Ascending aorta (tissue), 2 donors: ENCODE measurements at regions of chr20 and their contacts with region 1.

Region 1: GRCh38 chr20:50165684-50166554 is 12.4 kb upstream of the PEDS1 start:
- DNase-seq: peak; percentile 99 to 100
- H3K4me3 ChIP-seq: peak overlapping the region; percentile 42 to 56
- H3K27ac ChIP-seq: peak overlapping the region; percentile 72 to 80
- H3K4me1 ChIP-seq: peaks cover 10 to 12% of the 10 kb centered on the region in 2 donors
- H3K27me3 ChIP-seq: no peaks in the 10 kb centered on the region
- CTCF ChIP-seq: no peak

Region 2: GRCh38 chr20:49982346-49983122 is 183.4 kb before region 1 on chr20 and contains the start of gene SNAI1:
- intact Hi-C with region 1: loop called (anchors 5 kb)
- DNase-seq: peak in 1 of 2 donors; percentile 84
- H3K4me3 ChIP-seq: peak within 1 kb of the TSS; percentile 66 to 80
- H3K27ac ChIP-seq: peak within 1 kb of the TSS; percentile 69 to 71
- H3K4me1 ChIP-seq: peaks cover 12 to 37% of the 10 kb centered on the region in 2 donors
- H3K27me3 ChIP-seq: no peaks in the 10 kb centered on the region
- CTCF ChIP-seq: peak; percentile 35 to 84 (median 62)
- total RNA-seq, gene SNAI1: 64.4 TPM

Region 3: DNA sequence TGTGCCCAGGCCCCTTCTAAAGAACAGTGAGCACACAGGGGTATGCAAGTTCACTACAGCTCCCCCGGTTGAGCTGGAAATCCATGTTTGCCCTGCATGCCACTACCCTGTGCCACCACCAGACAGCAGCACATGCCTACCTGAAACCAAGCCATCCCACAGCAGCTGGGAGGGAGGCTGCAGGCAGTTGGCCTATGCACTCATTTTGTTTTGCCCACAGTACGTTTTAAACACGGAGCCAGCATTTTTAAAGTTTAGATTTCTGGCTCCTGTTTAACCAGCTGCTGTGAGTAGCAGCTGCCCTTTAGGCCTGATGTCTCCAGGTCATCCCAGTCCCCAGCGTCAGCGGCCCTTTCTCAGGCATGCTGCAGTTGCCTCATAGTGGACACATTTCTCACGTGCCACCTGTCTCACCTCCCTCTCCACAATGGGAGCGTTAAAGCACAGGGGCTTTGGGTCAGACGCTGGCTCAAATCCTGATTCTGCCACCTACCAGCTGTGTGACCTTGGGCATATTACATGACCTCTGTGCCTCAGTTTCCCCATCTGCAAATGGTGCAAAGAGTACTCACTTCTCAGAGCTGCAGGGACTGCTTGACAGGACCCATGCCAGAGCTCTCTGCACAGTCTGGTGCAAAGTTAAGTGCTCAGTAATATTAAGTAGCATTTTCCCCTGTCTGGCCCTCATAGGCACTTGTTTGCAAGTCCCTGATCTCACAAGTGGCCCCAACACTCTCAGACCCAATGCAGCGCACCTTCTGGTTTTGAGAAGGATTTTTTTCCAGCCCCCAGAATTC is 44.8 kb before region 1 on chr20:
- intact Hi-C with region 1: loop called (anchors 1 kb)
- DNase-seq: peak in 1 of 2 donors; percentile 78
- H3K4me3 ChIP-seq: no peak overlapping the region
- H3K27ac ChIP-seq: no peak overlapping the region
- H3K4me1 ChIP-seq: peaks cover 0 to 6% of the 10 kb centered on the region in 2 donors
- H3K27me3 ChIP-seq: no peaks in the 10 kb centered on the region
- CTCF ChIP-seq: peak; percentile 80 to 87 (median 86)

Region 4: DNA sequence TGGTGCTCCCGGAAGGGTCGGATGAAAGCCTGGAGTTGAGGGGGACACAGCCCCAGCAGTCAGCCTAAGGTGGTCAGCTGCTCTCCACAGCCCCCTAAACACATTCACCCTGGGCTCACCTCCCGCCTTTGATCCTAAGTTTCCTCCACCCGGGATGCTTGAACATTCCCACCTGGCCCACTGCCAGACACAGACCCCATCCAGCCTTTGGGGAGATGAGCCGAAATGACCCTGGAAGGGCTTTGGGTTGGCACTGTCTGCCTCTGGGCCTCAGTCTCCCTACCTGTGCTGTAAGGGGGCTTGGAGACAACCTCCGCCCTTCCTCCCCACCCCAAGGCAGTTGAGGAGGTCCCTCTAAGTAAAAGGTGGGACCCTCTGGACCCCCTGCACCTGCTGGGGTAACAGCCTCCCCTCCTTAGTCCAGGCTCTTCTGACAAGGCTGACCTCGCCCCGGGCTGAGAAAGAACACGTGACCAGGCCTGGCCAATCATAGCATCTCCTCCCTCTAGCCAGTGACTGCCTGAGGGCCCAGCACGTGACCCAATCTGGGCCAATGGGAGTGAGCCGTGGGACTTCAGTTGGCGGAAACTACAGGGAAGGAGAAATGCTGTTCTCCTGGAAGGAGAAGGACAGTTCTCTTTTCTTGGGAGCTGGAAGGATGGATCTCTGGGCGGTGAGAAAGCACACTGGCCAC is 36.1 kb before region 1 on chr20:
- intact Hi-C with region 1: loop called (anchors 2 kb)
- DNase-seq: no peak
- H3K4me3 ChIP-seq: peak overlapping the region in 1 of 2 donors; percentile 34
- H3K27ac ChIP-seq: peak overlapping the region; percentile 54 to 60
- H3K4me1 ChIP-seq: peaks cover 13 to 16% of the 10 kb centered on the region in 2 donors
- H3K27me3 ChIP-seq: no peaks in the 10 kb centered on the region
- CTCF ChIP-seq: no peak

Region 5: DNA sequence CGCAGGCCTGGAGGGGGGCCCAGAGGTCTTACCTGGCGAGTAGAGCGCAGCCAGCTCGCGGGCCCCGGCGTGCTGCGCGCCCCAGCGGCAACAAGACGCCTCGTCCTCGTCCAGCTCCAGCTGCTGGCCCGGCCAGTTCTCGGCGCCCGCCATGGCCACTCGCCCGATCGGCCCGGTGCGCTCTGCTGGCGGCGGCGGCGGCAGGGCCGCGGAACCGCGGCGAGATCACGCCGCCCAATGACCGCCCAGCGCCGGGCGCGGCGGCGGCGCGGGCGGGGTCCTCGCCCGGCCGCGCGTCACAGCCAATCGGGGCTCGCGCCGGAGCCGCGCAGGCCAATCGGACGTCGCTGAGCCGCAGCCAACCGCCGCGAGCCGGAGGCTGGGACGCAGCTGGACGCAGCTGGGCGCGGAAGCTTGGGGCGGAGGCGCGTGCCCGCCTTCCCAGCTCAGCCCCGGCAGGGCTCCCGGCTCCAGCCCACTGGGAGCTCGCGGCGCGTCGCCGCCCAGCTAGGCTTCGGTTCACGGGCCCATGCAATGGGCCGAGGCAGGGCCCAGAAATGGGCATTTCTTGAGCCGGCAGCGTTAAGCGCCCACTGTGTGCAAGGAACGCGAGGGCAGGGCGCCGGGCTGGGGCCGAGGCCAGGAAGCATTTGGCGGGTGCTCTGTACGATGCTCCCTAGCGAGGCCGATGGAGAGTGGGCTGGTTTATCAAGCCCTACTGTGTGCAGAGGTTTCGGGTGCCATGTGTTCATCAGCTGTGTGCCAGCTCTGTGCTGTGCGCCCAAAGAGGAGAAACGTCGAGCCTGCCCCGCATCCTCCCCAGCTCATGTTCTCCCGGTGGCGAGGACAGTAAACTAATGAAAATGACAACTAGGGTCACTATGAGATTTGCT is 12.2 kb before region 1 on chr20 and contains the start of gene PEDS1:
- intact Hi-C with region 1: loop called (anchors 1 kb)
- DNase-seq: peak; percentile 49 to 94
- H3K4me3 ChIP-seq: peak within 1 kb of the TSS; percentile 81 to 84
- H3K27ac ChIP-seq: peak within 1 kb of the TSS; percentile 73 to 76
- H3K4me1 ChIP-seq: peaks cover 7 to 23% of the 10 kb centered on the region in 2 donors
- H3K27me3 ChIP-seq: no peaks in the 10 kb centered on the region
- CTCF ChIP-seq: peak in 1 of 3 experiments; percentile 14
- total RNA-seq, gene PEDS1: 23.9 TPM

Region 6: GRCh38 chr20:50308513-50309279 is 142.8 kb after region 1 on chr20:
- intact Hi-C with region 1: no loop called
- DNase-seq: peak; percentile 84 to 98
- H3K4me3 ChIP-seq: peak overlapping the region in 1 of 2 donors; percentile 31
- H3K27ac ChIP-seq: peak overlapping the region; percentile 85 to 89
- H3K4me1 ChIP-seq: peaks cover 19 to 37% of the 10 kb centered on the region in 2 donors
- H3K27me3 ChIP-seq: no peaks in the 10 kb centered on the region
- CTCF ChIP-seq: peak in 1 of 3 experiments; percentile 8